RWPE1 (cell line): ENCODE measurements at regions of chr2 and their contacts with region 1.

Region 1: GRCh38 chr2:121038891-121039616 is 245.9 kb downstream of the TFCP2L1 start:
- DNase-seq: peak; percentile 81
- H3K27ac ChIP-seq: peak overlapping the region; percentile 47
- CTCF ChIP-seq: no peak

Region 2: DNA sequence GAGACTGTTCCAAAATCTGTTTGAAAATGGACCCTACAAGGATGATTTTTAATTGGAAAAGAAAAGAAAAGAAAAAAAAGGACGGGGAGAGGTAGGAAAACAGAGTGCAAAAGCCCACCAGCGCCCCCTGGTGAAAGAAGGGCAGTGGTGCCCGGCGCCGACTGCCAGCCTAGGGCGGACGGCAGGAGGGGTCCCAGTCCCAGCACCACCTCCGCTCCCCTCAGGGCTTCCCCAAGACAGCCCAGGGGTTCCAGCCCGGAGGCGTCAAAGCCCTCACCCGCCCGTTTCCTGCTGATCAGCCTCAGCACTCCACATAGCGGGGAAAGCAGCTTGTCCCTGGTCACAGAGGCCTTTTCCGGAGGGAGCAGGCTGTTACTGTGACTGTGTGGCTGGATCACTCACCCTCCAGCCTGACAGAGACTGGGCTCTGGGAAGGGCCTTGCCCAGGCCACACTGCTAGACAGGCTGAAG is 32.0 kb after region 1 on chr2:
- CTCF ChIA-PET with region 1: interaction called, 10 read pairs
- POLR2A ChIA-PET with region 1: no interaction called
- DNase-seq: peak; percentile 71
- H3K27ac ChIP-seq: no peak overlapping the region
- CTCF ChIP-seq: peak; percentile 96